ENCODE measurements at regions of chr20 and their contacts with region 1.

Region 1: GRCh38 chr20:32437391-32438074 is 79.4 kb downstream of the ASXL1 start:
- DNase-seq: peak in 1 of 4 experiments; percentile 25
- ATAC-seq: no peak; the same call in 2 of the 3 replicates
- H3K4me3 ChIP-seq: no peak overlapping the region
- H3K27ac ChIP-seq: no peak overlapping the region
- H3K4me1 ChIP-seq: peaks cover 0 to 3% of the 10 kb centered on the region in 2 experiments; a peak in 1 of 5 replicates
- H3K27me3 ChIP-seq: no peaks in the 10 kb centered on the region
- CTCF ChIP-seq: peak; percentile 40 to 57 (median 55)
- EP300 ChIP-seq: no peak
- POLR2A ChIP-seq: no peak
- RAD21 ChIP-seq: peak in 1 of 2 experiments; percentile 32; a peak in 2 of 4 replicates

Region 2: GRCh38 chr20:32155017-32155981 is 282.2 kb before region 1 on chr20:
- CTCF ChIA-PET with region 1: interaction called, 7 read pairs
- POLR2A ChIA-PET with region 1: no interaction called
- in situ Hi-C with region 1: no loop called
- intact Hi-C with region 1: loop called (anchors 5 kb)
- DNase-seq: peak in 3 of 4 experiments; percentile 32 to 63 (median 41)
- ATAC-seq: peak; percentile 79
- H3K4me3 ChIP-seq: no peak overlapping the region
- H3K27ac ChIP-seq: no peak overlapping the region
- H3K4me1 ChIP-seq: peaks cover 9 to 14% of the 10 kb centered on the region in 2 experiments
- H3K27me3 ChIP-seq: no peaks in the 10 kb centered on the region
- CTCF ChIP-seq: peak; percentile 47 to 73 (median 68)
- EP300 ChIP-seq: no peak
- POLR2A ChIP-seq: no peak
- RAD21 ChIP-seq: peak; percentile 23 to 78; a peak in 2 of 4 replicates

Region 3: GRCh38 chr20:32336918-32337347 is 100.6 kb before region 1 on chr20:
- CTCF ChIA-PET with region 1: interaction called, 4 read pairs
- POLR2A ChIA-PET with region 1: interaction called, 3 read pairs
- in situ Hi-C with region 1: loop called (anchors 5 kb)
- intact Hi-C with region 1: loop called (anchors 2 kb)
- DNase-seq: peak; percentile 38 to 62 (median 49)
- ATAC-seq: peak; percentile 58
- H3K4me3 ChIP-seq: no peak overlapping the region
- H3K27ac ChIP-seq: no peak overlapping the region
- H3K4me1 ChIP-seq: peaks cover 3 to 33% of the 10 kb centered on the region in 2 experiments
- H3K27me3 ChIP-seq: no peaks in the 10 kb centered on the region
- CTCF ChIP-seq: peak; percentile 50 to 71 (median 70); a peak in 5 of 6 replicates
- EP300 ChIP-seq: no peak
- POLR2A ChIP-seq: no peak
- RAD21 ChIP-seq: peak; percentile 54 to 70

Region 4: DNA sequence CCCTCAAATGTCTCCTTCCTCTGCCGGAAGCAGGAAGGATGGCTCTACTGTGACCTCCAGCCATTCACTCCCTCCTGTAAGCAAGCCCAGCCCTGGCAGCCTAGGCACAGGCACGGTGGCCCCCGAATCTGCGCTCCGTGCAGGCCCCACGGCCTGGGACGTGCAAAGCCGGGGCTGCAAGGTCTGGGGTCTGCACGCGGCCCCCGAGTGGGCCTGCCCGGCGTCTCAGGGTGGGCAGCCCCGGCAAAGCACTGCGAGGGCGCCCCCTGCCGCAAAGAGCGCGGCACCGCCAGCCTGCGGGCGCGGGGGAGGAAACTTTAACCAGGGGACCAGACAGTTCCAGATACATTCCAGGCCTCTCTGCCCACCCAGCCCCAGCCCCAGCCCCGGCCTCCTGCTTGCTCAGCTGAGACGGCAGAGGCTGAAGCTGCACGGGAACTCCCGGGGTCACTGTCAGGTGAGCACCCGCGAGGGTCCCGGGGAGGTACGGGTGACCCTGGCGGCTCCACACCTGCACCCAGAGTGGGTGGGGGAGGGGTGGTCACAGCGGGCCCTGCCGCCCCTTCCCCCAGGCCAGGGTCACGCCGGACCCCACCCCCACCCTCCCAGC is 19.4 kb after region 1 on chr20:
- CTCF ChIA-PET with region 1: no interaction called
- POLR2A ChIA-PET with region 1: no interaction called
- in situ Hi-C with region 1: no loop called
- intact Hi-C with region 1: no loop called
- DNase-seq: no peak
- ATAC-seq: no peak; the same call in 2 of the 3 replicates
- H3K4me3 ChIP-seq: no peak overlapping the region
- H3K27ac ChIP-seq: no peak overlapping the region
- H3K4me1 ChIP-seq: peaks cover 0 to 49% of the 10 kb centered on the region in 2 experiments; a peak in 2 of 5 replicates
- H3K27me3 ChIP-seq: no peaks in the 10 kb centered on the region
- CTCF ChIP-seq: peak in 1 of 3 experiments; percentile 7; a peak in 1 of 6 replicates
- EP300 ChIP-seq: no peak
- POLR2A ChIP-seq: no peak
- RAD21 ChIP-seq: peak in 1 of 2 experiments; percentile 11; a peak in 1 of 4 replicates